ENCODE measurements at regions of chr18 and their contacts with region 1.

Region 1: GRCh38 chr18:57561728-57562423 is 24.6 kb downstream of the FECH start:
- DNase-seq: peak in 1 of 7 donors; percentile 11
- H3K4me3 ChIP-seq: no peak overlapping the region
- H3K27ac ChIP-seq: no peak overlapping the region
- H3K4me1 ChIP-seq: no peaks in the 10 kb centered on the region
- H3K27me3 ChIP-seq: no peaks in the 10 kb centered on the region
- CTCF ChIP-seq: peak; percentile 61 to 90 (median 70)
- POLR2A ChIP-seq: no peak

Region 2: DNA sequence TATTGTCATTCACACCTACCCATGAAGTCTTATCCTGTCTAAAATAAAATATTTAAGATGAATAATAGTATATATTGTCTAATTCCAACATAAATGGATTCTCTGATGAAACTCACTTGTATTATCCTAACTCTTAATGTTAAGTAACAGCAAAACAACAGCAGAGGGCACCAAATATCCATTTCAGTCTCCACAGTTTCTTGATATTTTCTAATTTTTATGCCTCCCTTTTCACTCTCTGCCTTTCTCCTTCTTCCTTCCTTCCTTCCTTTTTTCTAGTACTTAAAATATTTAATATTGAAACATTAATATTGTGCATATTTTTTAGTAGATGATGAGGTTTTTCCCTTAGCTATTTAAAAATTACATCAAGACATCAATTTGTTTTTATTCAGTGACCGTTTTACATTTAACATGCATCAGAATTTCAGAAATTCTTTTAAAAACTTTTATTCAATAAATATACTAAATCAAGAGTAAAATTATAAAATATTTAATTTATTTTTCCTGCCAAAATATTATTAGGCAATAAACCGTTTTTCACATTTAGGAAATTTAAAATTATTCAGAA is 813.1 kb before region 1 on chr18:
- intact Hi-C with region 1: loop called in 1 of 2 experiments (anchors 10 kb)
- DNase-seq: peak in 2 of 7 donors; percentile 4 to 11
- H3K4me3 ChIP-seq: no peak overlapping the region
- H3K27ac ChIP-seq: no peak overlapping the region
- H3K4me1 ChIP-seq: no peaks in the 10 kb centered on the region
- H3K27me3 ChIP-seq: no peaks in the 10 kb centered on the region
- CTCF ChIP-seq: peak; percentile 31 to 72 (median 58)
- POLR2A ChIP-seq: no peak